Heart right ventricle (tissue), 16 donors: ENCODE measurements at regions of chr1 and their contacts with region 1.

Region 1: DNA sequence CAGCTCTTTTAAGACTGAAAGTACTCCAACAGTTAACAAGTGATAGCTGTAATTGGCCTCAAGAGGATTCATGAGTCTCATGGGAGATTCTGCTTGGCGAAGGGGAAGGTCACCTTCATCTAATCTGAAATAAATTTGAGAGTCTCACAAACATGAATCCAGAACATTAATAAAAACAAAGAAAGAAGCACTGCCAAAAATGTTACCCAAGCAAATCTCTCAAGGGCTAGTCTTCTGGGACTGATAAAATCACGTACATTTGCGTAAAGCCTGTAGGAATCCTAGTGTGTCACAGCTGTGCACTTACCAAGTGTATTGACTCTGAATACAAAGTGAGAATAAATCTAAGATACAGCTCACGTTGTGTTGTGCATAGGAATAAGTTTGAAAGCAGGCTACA is 21.2 kb upstream of the NUF2 start:
- DNase-seq: no peak
- ATAC-seq: peak in 5 of 8 donors; percentile 22 to 77 (median 38)
- H3K4me3 ChIP-seq: no peak overlapping the region
- H3K27ac ChIP-seq: peak overlapping the region in 1 of 10 donors; percentile 16
- H3K4me1 ChIP-seq: peaks cover 0 to 12% (median 0%) of the 10 kb centered on the region in 9 donors
- H3K27me3 ChIP-seq: no peaks in the 10 kb centered on the region
- CTCF ChIP-seq: no peak

Region 2: GRCh38 chr1:163186862-163187261 is 113.7 kb before region 1 on chr1:
- intact Hi-C with region 1: loop called in 2 of 10 experiments (anchors 5 kb)
- DNase-seq: no peak
- ATAC-seq: no peak
- H3K4me3 ChIP-seq: no peak overlapping the region
- H3K27ac ChIP-seq: peak overlapping the region in 4 of 10 donors; percentile 5 to 71 (median 51)
- H3K4me1 ChIP-seq: peaks cover 0 to 37% (median 3%) of the 10 kb centered on the region in 9 donors
- H3K27me3 ChIP-seq: no peaks in the 10 kb centered on the region
- CTCF ChIP-seq: no peak

Region 3: GRCh38 chr1:163227126-163227525 is 73.4 kb before region 1 on chr1:
- intact Hi-C with region 1: loop called in 1 of 10 experiments (anchors 5 kb)
- DNase-seq: no peak
- ATAC-seq: no peak
- H3K4me3 ChIP-seq: no peak overlapping the region
- H3K27ac ChIP-seq: no peak overlapping the region
- H3K4me1 ChIP-seq: peaks cover 0 to 18% (median 11%) of the 10 kb centered on the region in 9 donors
- H3K27me3 ChIP-seq: no peaks in the 10 kb centered on the region
- CTCF ChIP-seq: no peak

Region 4: GRCh38 chr1:163275222-163275621 is 25.3 kb before region 1 on chr1:
- intact Hi-C with region 1: loop called in 1 of 10 experiments (anchors 2 kb)
- DNase-seq: no peak
- ATAC-seq: no peak
- H3K4me3 ChIP-seq: no peak overlapping the region
- H3K27ac ChIP-seq: no peak overlapping the region
- H3K4me1 ChIP-seq: peaks cover 0 to 7% (median 0%) of the 10 kb centered on the region in 9 donors
- H3K27me3 ChIP-seq: no peaks in the 10 kb centered on the region
- CTCF ChIP-seq: no peak